ENCODE measurements at regions of chr1 and their contacts with region 1.

Region 1: GRCh38 chr1:44049839-44050238 is 18.6 kb upstream of the SLC6A9 start:
- DNase-seq: no peak
- ATAC-seq: no peak
- H3K4me3 Mint-ChIP-seq: no peak overlapping the region
- H3K27ac Mint-ChIP-seq: no peak overlapping the region
- H3K4me1 Mint-ChIP-seq: no peaks in the 10 kb centered on the region
- H3K27me3 Mint-ChIP-seq: peaks cover 17% of the 10 kb centered on the region
- CTCF ChIP-seq: no peak

Region 2: DNA sequence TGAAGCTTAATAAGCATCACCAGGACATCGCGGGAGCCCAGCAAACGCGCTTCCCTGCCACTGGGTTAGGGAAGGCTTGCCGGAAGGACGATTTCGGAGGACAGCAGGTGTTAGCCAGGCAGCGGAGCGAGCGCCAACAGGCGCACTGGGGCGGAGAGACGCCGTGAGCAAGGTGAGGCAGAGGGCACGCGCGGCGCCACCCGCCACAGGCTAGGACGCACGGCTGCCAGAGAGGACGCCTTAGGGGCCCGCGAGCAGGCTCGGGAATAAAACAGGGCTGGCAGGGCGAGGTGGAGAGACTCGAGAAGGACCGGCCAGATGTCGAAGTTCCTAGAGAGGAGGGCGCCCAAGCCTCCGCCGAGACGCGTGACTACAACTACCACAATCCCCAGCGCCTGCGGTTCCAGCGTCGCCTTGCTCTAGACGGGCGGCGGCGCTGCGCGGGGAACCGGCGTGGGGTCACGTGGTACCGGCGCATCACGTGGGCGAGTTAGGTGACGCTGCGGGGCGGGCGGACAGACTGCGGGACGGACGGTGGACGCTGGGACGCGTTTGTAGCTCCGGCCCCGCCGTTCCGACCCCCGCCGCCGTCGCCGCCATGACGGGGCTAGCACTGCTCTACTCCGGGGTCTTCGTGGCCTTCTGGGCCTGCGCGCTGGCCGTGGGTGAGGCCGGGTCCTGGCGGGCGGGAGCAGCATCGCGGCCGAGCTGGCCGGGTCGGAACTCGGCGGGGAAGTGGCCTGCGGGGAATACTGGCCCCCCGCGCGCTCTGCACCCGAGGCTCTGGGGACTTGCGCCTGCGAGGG is 75.2 kb before region 1 on chr1 and contains the start of gene ATP6V0B:
- CTCF ChIA-PET with region 1: interaction called, 11 read pairs
- POLR2A ChIA-PET with region 1: interaction called, 4 read pairs
- DNase-seq: peak; percentile 96
- ATAC-seq: peak; percentile 70
- H3K4me3 Mint-ChIP-seq: peak within 1 kb of the TSS; percentile 89
- H3K27ac Mint-ChIP-seq: peak within 1 kb of the TSS; percentile 93
- H3K4me1 Mint-ChIP-seq: peaks cover 43% of the 10 kb centered on the region
- H3K27me3 Mint-ChIP-seq: no peaks in the 10 kb centered on the region
- CTCF ChIP-seq: no peak
- total RNA-seq, gene ATP6V0B: 108 to 115 TPM (median 110 TPM) in 3 replicates

Region 3: GRCh38 chr1:44002606-44003157 is 47.2 kb before region 1 on chr1:
- CTCF ChIA-PET with region 1: interaction called, 49 read pairs
- POLR2A ChIA-PET with region 1: no interaction called
- DNase-seq: peak; percentile 40
- ATAC-seq: peak; percentile 62
- H3K4me3 Mint-ChIP-seq: no peak overlapping the region
- H3K27ac Mint-ChIP-seq: no peak overlapping the region
- H3K4me1 Mint-ChIP-seq: peaks cover under 1% of the 10 kb centered on the region; the same call in 1 of the 2 replicates
- H3K27me3 Mint-ChIP-seq: no peaks in the 10 kb centered on the region; the same call in 1 of the 2 replicates
- CTCF ChIP-seq: peak; percentile 62; the same call in 1 of the 2 replicates

Region 4: GRCh38 chr1:44036409-44037139 is 13.3 kb before region 1 on chr1:
- CTCF ChIA-PET with region 1: interaction called, 84 read pairs
- POLR2A ChIA-PET with region 1: interaction called, 3 read pairs
- DNase-seq: peak; percentile 80
- ATAC-seq: peak; percentile 64
- H3K4me3 Mint-ChIP-seq: no peak overlapping the region
- H3K27ac Mint-ChIP-seq: no peak overlapping the region
- H3K4me1 Mint-ChIP-seq: peaks cover 26% of the 10 kb centered on the region
- H3K27me3 Mint-ChIP-seq: peaks cover 4% of the 10 kb centered on the region
- CTCF ChIP-seq: peak; percentile 55; the same call in 1 of the 2 replicates

Region 5: DNA sequence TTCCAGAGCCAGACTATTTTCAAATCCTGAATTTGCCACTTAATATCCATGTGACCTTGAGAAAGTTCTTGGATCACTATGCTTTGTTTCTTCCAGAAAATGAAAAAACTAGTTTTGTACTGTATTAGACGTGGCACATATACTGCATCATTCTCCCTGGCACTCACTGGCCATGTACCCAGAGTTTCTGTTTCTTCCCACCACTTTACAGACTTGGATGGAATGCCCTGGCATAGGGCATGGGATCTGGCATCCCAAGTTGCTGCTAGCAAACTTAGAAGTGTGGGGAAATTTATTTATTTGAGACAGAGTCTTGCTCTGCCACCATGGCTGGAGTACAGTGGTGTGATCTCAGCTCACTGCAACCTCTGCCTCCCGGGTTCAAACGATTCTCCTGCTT is 81.6 kb after region 1 on chr1:
- CTCF ChIA-PET with region 1: no interaction called
- POLR2A ChIA-PET with region 1: no interaction called
- DNase-seq: no peak
- ATAC-seq: no peak
- H3K4me3 Mint-ChIP-seq: no peak overlapping the region
- H3K27ac Mint-ChIP-seq: no peak overlapping the region
- H3K4me1 Mint-ChIP-seq: no peaks in the 10 kb centered on the region
- H3K27me3 Mint-ChIP-seq: peaks cover 22% of the 10 kb centered on the region
- CTCF ChIP-seq: no peak

Region 6: DNA sequence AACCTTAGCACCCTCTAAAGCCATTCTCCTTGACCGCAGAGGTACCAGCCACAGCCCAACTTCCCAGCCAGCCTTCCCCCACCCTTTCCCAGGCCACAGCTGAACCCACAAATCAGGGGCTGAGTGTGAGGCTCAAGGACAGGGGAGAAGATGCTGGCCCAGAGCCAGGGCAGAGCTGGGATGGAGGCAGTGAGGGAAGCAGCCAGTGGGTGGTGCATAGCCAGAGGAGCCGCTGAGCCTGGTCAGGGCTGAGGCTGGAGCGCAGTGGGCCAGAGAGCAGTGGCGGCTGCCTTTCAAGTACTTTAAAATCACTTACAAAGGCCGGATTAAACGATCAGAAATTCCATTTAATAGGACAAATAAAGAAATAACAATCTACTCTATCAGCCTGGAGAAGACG is 199.7 kb after region 1 on chr1:
- CTCF ChIA-PET with region 1: no interaction called
- POLR2A ChIA-PET with region 1: no interaction called
- DNase-seq: peak; percentile 40
- ATAC-seq: peak; percentile 87
- H3K4me3 Mint-ChIP-seq: no peak overlapping the region
- H3K27ac Mint-ChIP-seq: no peak overlapping the region; the same call in 1 of the 2 replicates
- H3K4me1 Mint-ChIP-seq: peaks cover 16% of the 10 kb centered on the region
- H3K27me3 Mint-ChIP-seq: no peaks in the 10 kb centered on the region
- CTCF ChIP-seq: no peak